ENCODE measurements at regions of chr5 and their contacts with region 1.

Region 1: GRCh38 chr5:128905571-128906110 is 59.6 kb upstream of the SLC27A6 start:
- DNase-seq: peak; percentile 33
- H3K4me3 Mint-ChIP-seq: no peak overlapping the region
- H3K27ac Mint-ChIP-seq: no peak overlapping the region
- H3K4me1 Mint-ChIP-seq: no peaks in the 10 kb centered on the region
- H3K27me3 Mint-ChIP-seq: peaks cover under 1% of the 10 kb centered on the region

Region 2: DNA sequence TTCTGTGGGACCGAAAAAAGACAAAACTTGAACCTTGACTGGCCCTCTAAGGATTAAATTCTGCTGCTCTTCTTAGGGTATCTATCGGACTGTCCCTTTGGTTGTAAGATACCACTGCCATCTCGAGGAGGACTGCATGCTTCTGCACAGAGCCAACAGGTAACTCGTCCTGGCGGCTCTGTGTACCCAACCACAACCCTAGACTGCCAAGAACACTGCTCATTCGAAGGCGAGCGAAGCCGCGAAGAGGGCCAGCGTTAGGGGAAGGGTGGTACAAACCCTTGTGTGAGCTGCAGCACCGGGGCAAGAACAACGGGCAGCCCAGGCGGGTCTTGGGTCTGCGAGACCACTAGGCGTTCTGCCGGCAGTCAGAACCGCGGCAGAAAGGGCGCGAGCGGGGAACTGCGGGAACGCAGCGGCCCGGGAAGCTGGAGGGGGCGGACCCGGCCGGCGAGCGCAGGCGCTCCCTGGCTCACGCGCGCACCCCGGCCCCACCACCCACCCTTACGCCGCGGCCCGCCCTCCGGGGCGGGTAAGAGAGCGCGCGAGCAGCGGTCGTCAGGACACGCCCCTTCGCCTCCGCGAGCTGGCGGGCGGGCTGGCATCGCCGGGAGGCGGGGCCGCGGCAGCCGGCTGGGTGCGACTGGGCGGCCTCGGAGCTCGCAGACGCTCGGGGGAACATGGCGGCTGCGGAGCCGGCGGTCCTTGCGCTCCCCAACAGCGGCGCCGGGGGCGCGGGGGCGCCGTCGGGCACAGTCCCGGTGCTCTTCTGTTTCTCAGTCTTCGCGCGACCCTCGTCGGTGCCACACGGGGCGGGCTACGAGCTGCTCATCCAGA is 188.7 kb after region 1 on chr5 and contains the start of gene ISOC1:
- CTCF ChIA-PET with region 1: interaction called, 3 read pairs
- POLR2A ChIA-PET with region 1: no interaction called
- intact Hi-C with region 1: loop called (anchors 1 kb)
- DNase-seq: peak; percentile 94
- H3K4me3 Mint-ChIP-seq: peak within 1 kb of the TSS; percentile 82
- H3K27ac Mint-ChIP-seq: peak within 1 kb of the TSS; percentile 64
- H3K4me1 Mint-ChIP-seq: peaks cover 22% of the 10 kb centered on the region
- H3K27me3 Mint-ChIP-seq: peaks cover 7% of the 10 kb centered on the region
- total RNA-seq, gene ISOC1: 23.3 to 25.1 TPM

Region 3: GRCh38 chr5:129135633-129136032 is 230.0 kb after region 1 on chr5:
- CTCF ChIA-PET with region 1: no interaction called
- POLR2A ChIA-PET with region 1: no interaction called
- intact Hi-C with region 1: loop called (anchors 2 kb)
- DNase-seq: peak; percentile 18
- H3K4me3 Mint-ChIP-seq: no peak overlapping the region
- H3K27ac Mint-ChIP-seq: no peak overlapping the region
- H3K4me1 Mint-ChIP-seq: no peaks in the 10 kb centered on the region
- H3K27me3 Mint-ChIP-seq: no peaks in the 10 kb centered on the region

Region 4: DNA sequence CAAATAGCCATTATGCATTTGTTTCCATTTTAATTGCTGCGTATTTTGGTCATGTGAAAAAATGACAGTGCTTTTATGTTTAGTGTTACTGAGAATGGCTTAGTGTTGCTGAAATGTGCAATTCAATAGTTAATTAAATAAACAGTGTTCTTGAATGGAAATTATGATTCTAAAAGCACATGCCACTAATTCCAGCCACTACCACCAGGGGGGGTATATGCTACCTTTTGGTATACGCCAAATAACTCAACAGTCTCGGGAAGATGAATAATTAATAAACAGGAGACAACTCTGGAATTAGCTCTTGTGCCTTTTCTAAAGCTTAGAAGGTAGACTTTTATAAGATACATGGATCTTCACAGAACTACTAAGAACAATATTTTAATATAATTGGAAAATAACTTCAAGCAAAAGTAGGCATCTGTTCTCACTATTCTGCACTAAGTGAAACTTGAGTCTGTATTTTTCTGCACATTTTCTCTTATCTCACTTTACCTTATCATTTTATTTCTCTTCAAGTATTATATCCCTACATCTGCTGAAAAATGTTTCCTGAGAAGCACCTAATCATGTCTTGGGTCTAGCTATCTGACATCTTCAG is 758.8 kb after region 1 on chr5:
- CTCF ChIA-PET with region 1: no interaction called
- POLR2A ChIA-PET with region 1: no interaction called
- intact Hi-C with region 1: loop called (anchors 5 kb)
- DNase-seq: peak; percentile 29
- H3K4me3 Mint-ChIP-seq: no peak overlapping the region
- H3K27ac Mint-ChIP-seq: no peak overlapping the region
- H3K4me1 Mint-ChIP-seq: no peaks in the 10 kb centered on the region
- H3K27me3 Mint-ChIP-seq: no peaks in the 10 kb centered on the region

Measured in activated CD4-positive, alpha-beta memory T cell treated with anti-CD3 and anti-CD28 coated beads for 36 hours (primary cell).